Prostate gland (tissue), 2 donors: ENCODE measurements at regions of chr10 and their contacts with region 1.

Region 1: DNA sequence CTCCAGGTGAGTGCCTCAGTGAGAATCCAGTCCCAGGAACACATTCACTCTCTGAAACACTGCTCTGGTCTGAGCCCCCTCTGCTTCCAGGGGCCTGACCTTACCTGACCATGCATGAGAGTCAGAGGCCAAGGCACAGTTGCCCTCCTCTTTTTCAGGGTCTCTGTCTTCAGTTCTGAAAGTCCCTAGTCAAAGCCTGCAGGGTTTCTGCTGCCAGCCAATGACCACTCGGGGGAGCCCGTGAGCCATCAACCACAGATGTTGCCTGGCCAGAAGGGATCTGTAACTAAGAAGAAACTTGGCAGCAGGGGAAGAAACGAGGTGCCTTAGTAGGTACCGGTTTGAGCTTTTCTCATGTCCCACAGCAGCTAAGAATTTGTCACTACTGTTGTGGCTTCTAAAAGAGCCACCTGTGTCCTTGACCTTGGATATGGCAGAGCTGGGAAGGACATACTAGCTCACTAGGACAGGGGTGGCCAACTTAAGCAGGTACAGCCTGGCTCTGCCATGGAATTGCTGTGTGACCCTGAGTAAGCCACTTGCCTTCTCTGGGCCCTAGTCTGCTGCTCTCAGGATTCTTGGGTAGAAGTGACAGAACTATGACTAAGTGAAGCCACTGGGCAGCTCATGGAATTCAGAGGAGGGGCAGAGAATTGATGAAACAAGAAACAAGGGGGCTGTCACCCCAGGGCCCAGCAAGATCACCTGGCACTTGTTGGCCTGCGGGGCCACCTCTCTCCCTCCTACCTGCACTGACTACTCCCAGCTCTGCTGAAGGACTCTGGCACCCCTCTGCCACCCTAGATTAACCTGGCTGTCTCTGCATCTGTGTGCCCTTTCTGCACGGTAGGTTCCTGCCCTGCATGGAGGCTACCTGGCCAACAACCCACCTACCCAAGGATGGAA is 83.8 kb upstream of the GPR26 start:
- DNase-seq: peak; percentile 75
- H3K4me3 ChIP-seq: no peak overlapping the region
- H3K27ac ChIP-seq: no peak overlapping the region
- H3K4me1 ChIP-seq: no peaks in the 10 kb centered on the region
- H3K27me3 ChIP-seq: peaks cover 3% of the 10 kb centered on the region
- CTCF ChIP-seq: peak; percentile 50 to 83 (median 76)
- POLR2A ChIP-seq: no peak

Region 2: GRCh38 chr10:123187781-123188180 is 394.6 kb before region 1 on chr10:
- intact Hi-C with region 1: no loop called
- DNase-seq: no peak
- H3K4me3 ChIP-seq: no peak overlapping the region
- H3K27ac ChIP-seq: no peak overlapping the region
- H3K4me1 ChIP-seq: no peaks in the 10 kb centered on the region
- H3K27me3 ChIP-seq: no peaks in the 10 kb centered on the region
- CTCF ChIP-seq: no peak
- POLR2A ChIP-seq: no peak

Region 3: DNA sequence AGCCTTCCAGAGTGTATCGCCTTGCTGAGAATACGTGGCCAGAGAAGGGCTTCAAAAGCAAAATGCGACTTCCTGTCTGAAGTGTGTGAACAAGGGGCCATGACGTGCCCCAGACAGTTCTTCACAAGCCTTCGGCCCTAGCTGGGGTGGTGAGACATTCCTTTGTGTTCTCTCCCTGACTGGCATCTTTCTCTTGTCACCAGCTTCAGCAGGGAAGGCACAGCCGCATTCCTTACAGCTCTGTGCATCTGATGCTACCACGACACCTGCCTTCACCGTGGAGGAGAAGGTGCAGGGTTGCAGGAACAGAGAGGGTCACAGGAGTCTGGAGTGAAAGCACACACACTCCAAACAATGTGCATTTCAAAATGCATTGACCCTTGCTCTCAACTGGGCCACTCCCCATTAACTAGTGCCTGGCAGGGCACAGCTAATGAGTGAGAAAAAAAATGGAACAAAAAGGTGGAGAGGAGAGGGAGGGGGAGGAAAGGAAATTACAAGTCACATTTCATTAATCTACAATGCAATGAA is 177.2 kb after region 1 on chr10:
- intact Hi-C with region 1: loop called (anchors 10 kb)
- DNase-seq: no peak
- H3K4me3 ChIP-seq: no peak overlapping the region
- H3K27ac ChIP-seq: no peak overlapping the region
- H3K4me1 ChIP-seq: no peaks in the 10 kb centered on the region
- H3K27me3 ChIP-seq: peaks cover 5% of the 10 kb centered on the region
- CTCF ChIP-seq: no peak
- POLR2A ChIP-seq: no peak

Region 4: GRCh38 chr10:123868038-123869019 is 286.0 kb after region 1 on chr10:
- intact Hi-C with region 1: loop called (anchors 10 kb)
- DNase-seq: no peak
- H3K4me3 ChIP-seq: no peak overlapping the region
- H3K27ac ChIP-seq: no peak overlapping the region
- H3K4me1 ChIP-seq: no peaks in the 10 kb centered on the region
- H3K27me3 ChIP-seq: no peaks in the 10 kb centered on the region
- CTCF ChIP-seq: no peak
- POLR2A ChIP-seq: no peak

Region 5: GRCh38 chr10:123967396-123968243 is 385.3 kb after region 1 on chr10:
- intact Hi-C with region 1: loop called (anchors 1 kb)
- DNase-seq: peak; percentile 64
- H3K4me3 ChIP-seq: no peak overlapping the region
- H3K27ac ChIP-seq: no peak overlapping the region
- H3K4me1 ChIP-seq: peaks cover 4% of the 10 kb centered on the region
- H3K27me3 ChIP-seq: peaks cover 20% of the 10 kb centered on the region
- CTCF ChIP-seq: peak; percentile 86 to 94 (median 90)
- POLR2A ChIP-seq: no peak

Region 6: DNA sequence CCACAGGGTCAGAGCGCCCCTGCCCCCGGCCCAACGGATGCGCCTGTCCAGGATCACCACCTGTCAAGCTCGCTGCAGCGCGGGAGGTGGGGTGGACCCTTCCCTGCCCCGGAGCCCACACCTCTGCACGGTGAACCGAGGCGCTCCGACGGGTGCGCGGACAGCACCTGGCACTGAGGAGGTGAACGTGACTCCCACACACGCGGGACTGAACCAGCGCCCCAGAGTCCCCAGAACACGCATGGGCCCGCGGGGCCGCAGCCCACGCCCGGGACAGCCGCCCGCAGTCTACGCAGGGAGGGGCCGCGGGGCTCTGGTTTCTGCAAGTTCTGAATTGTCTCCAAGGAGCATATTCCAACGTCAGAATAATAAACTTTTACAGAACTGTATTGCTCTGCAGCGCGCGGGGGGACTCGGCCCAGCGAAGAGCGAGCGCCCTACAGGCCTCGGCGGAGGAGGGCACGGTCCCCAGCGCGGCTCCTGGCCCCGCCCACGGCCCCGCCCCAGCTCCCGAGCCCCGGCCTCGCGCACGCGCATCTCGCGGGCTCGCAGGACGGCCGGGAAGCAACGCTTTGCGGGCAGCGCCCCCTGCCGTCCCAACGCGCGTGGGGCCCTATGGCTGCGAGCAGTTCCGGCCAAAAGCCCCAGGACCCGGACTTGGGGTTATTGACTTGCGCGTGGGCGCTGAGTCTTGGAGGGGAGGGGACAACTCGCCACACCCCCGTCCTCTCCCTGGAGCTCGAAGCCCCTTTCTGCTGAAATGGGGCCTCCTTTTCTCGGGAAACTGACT is 806.7 kb after region 1 on chr10:
- intact Hi-C with region 1: loop called (anchors 5 kb)
- DNase-seq: peak; percentile 84
- H3K4me3 ChIP-seq: peak overlapping the region; percentile 36 to 37
- H3K27ac ChIP-seq: no peak overlapping the region
- H3K4me1 ChIP-seq: no peaks in the 10 kb centered on the region
- H3K27me3 ChIP-seq: no peaks in the 10 kb centered on the region
- CTCF ChIP-seq: peak; percentile 96 to 99 (median 98)
- POLR2A ChIP-seq: peak; percentile 7